Activated CD8-positive, alpha-beta T cell treated with anti-CD3 and anti-CD28 coated beads for 36 hours (primary cell): ENCODE measurements at regions of chr19 and their contacts with region 1.

Region 1: DNA sequence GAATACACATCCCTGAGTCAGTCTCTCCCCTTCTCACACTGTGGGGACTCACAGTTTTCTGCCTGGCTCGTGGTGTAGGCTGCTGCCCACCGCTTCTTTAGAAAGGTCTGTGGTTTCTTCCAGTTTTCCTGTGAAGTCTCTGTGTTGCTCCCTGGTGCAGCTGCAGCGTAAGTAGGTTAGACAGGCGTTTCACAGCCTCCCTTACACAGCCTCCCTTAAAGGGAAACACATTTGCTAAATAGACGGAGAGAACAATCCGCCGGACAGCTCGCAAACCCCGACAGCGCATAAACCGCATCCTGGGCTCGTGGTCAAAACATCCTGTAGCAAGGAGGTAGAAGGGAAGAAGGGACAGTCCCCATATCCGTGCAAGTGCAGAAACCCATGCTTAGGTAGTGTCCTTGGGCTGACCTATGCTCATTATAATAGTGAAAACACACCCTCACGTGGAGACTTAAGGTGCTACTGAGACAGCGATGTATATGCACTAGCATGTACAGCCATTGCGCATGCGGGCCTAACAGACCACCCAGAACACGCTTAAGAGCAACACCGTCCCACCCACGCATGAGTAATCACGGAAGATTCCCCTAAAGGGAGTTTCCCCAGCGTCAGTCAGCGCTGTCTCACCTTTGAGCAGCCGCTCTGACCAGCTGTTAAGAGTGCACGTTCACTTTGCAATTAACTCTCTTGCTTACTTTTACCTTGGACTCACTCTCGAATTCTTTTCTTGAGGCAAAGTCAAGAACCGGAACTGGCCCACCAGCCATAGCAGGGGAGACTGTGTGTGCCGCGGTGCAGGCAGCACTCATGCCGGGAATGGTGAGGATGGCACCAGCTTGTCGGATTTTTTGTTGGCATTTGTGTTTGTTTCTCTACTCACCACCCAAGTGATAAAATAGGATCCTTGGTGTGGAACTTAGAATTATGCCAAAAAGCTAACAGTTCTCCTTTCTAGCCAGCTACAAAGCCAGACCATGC is 16.6 kb downstream of the SIGLEC8 start:
- DNase-seq: peak; percentile 99
- ATAC-seq: peak; percentile 90
- H3K4me3 Mint-ChIP-seq: peak overlapping the region; percentile 74
- H3K27ac Mint-ChIP-seq: peak overlapping the region; percentile 94
- H3K4me1 Mint-ChIP-seq: peaks cover 61% of the 10 kb centered on the region
- H3K27me3 Mint-ChIP-seq: peaks cover 3% of the 10 kb centered on the region
- CTCF ChIP-seq: no peak

Region 2: DNA sequence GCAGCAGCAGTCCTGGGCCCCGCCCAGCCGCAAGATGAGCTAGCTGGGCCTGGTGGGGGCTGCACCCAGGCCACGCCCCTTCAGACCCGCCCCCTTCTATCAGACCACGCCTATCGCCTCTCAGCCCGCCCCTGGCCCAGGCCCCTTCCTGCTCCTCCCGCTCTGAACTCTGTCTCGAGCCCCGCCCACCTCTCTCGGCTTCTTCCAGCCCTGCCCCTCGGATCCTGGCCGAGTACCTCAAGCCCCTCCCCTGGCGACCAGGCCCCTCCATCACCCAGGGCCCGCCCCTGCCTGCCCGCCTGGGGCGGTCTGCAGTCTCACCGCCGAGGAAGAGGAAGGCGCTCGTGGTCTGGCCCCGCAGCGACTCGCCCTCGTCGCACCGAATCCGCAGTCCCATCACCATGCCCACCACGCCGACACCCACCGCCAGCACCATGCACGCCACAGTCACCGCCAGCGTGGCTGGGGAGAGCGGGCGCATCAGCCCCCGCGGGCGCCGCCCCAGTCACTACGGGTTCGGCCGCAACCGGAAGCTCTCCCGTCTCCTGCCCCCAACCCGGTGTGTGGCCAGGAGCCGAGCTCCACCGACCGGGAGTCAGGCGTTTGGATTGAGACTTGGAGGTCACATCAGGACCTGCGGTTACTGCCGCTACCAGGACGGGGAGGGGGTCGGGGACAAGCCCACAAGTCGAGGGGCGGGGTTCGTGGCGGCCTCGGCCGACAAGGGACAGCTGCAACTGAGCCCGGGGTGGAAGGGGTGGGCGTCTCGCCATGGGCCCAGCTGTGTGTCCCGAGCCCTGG is 73.9 kb before region 1 on chr19:
- CTCF ChIA-PET with region 1: no interaction called
- POLR2A ChIA-PET with region 1: interaction called, 11 read pairs
- intact Hi-C with region 1: loop called (anchors 2 kb)
- DNase-seq: peak; percentile 100
- ATAC-seq: peak; percentile 84
- H3K4me3 Mint-ChIP-seq: peak overlapping the region; percentile 98
- H3K27ac Mint-ChIP-seq: peak overlapping the region; percentile 98
- H3K4me1 Mint-ChIP-seq: peaks cover 45% of the 10 kb centered on the region
- H3K27me3 Mint-ChIP-seq: no peaks in the 10 kb centered on the region
- CTCF ChIP-seq: no peak

Region 3: DNA sequence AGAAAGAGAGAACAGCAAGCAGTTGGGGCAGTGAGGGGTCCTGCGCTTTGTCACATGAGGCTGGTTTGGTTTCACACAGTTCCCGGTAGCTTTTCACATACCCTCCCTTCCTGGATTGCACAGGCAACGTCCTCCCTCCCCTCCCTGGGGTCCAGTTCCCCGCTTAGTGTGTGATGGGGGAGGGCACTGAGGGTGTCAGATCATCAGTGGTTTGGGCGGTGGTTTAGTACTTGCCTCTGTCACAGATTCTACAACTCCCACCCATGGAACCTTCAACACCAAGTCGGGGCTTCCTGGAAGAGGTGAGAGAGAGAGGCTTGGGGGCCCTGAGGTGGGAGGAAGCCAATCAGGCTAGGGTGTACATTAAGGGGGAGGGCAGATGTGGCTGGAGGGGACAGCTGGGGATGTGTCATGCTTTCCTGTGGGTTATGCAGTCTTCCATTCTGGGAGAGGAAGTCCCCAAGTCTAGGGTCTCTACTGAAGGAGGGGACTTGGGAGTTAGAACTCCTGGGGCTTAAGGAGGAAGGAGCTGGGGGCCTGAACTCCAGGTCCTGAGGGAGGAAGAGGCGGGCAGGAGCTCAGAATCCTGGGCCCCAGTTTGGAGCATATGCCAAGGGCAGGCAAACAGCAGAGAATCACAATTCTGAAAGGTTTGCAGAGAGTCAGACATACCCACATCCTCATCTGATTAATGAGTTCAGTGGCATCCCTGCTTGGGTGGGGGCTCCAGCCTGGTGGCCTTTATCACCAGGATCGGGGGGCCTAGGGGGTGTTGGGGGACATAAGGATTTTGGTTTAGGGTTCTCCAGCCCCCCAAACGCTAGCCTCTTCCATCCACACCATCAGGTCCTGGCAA is 68.8 kb before region 1 on chr19 and contains the start of gene NKG7:
- CTCF ChIA-PET with region 1: no interaction called
- POLR2A ChIA-PET with region 1: interaction called, 11 read pairs
- intact Hi-C with region 1: loop called (anchors 2 kb)
- DNase-seq: peak; percentile 96
- ATAC-seq: peak; percentile 83
- H3K4me3 Mint-ChIP-seq: peak within 1 kb of the TSS; percentile 98
- H3K27ac Mint-ChIP-seq: peak within 1 kb of the TSS; percentile 94
- H3K4me1 Mint-ChIP-seq: peaks cover 62% of the 10 kb centered on the region
- H3K27me3 Mint-ChIP-seq: no peaks in the 10 kb centered on the region
- CTCF ChIP-seq: no peak
- total RNA-seq, gene NKG7: 258 to 283 TPM